ENCODE measurements at regions of chr14 and their contacts with region 1.

Region 1: GRCh38 chr14:50003213-50004031 is 110.5 kb downstream of the ARF6 start:
- DNase-seq: peak; percentile 31
- H3K4me3 ChIP-seq: peak overlapping the region; percentile 38 to 67 (median 57)
- H3K27ac ChIP-seq: no peak overlapping the region
- H3K4me1 ChIP-seq: peaks cover 39% of the 10 kb centered on the region
- H3K27me3 ChIP-seq: no peaks in the 10 kb centered on the region
- CTCF ChIP-seq: no peak
- POLR2A ChIP-seq: peak; percentile 64

Region 2: DNA sequence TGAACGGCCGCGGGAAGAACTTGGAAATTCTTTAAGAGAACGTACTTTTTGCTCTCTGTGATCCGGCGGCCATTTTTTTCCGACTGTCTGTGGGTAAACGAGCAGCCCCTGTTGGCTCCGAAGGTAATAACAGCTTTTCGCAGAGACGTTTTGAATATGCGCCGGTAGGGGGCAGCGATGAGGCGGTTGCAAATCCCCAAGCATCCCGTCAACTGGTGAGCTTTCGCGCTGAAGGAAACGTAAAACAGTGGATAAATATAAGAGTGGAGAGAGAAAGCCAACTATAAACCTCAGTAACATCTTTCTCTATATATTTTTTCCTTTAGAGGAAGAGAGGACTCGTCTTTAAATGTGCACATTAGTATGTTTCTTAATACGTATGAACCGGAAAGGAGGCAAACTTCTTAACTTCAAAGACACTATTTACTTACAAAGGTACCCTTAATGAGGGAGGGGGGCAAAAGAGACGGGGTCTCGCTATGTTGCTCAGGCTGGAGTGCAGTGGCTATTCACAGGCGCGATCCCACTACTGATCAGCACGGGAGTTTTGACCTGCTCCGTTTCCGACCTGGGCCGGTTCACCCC is 141.2 kb before region 1 on chr14:
- CTCF ChIA-PET with region 1: interaction called, 12 read pairs
- POLR2A ChIA-PET with region 1: no interaction called
- dilution Hi-C with region 1: no loop called
- intact Hi-C with region 1: no loop called
- DNase-seq: peak; percentile 93
- H3K4me3 ChIP-seq: peak overlapping the region; percentile 59 to 91 (median 73)
- H3K27ac ChIP-seq: peak overlapping the region; percentile 77
- H3K4me1 ChIP-seq: peaks cover 15% of the 10 kb centered on the region
- H3K27me3 ChIP-seq: no peaks in the 10 kb centered on the region
- CTCF ChIP-seq: peak; percentile 100
- POLR2A ChIP-seq: no peak

Region 3: DNA sequence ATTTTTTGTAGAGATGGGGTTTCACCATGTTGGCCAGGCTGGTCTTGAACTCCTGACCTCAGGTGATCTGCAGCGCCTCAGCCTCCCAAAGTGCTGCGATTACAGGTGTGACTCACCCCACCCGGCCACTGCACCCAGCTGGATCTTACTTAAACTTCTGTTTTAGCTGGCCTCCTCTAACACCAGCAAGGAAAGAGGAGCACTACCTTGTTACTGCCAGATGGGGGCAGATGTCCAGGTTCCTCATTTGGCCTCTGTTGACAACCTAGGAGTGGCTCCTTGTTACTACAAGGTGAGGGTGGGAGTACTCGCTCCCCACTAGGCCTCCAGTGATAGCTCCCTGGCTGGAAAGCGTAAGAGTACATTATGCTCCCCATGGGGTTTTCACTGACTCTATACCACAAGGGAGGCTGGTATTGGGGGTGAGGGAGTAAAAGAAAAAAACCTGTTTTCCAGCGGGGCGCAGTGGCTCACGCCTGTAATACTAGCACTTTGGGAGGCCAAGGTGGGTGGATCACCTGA is 123.7 kb before region 1 on chr14:
- CTCF ChIA-PET with region 1: interaction called, 11 read pairs
- POLR2A ChIA-PET with region 1: no interaction called
- dilution Hi-C with region 1: no loop called
- intact Hi-C with region 1: no loop called
- DNase-seq: peak; percentile 66
- H3K4me3 ChIP-seq: no peak overlapping the region
- H3K27ac ChIP-seq: no peak overlapping the region
- H3K4me1 ChIP-seq: no peaks in the 10 kb centered on the region
- H3K27me3 ChIP-seq: no peaks in the 10 kb centered on the region
- CTCF ChIP-seq: peak; percentile 72 to 73
- POLR2A ChIP-seq: no peak

Region 4: DNA sequence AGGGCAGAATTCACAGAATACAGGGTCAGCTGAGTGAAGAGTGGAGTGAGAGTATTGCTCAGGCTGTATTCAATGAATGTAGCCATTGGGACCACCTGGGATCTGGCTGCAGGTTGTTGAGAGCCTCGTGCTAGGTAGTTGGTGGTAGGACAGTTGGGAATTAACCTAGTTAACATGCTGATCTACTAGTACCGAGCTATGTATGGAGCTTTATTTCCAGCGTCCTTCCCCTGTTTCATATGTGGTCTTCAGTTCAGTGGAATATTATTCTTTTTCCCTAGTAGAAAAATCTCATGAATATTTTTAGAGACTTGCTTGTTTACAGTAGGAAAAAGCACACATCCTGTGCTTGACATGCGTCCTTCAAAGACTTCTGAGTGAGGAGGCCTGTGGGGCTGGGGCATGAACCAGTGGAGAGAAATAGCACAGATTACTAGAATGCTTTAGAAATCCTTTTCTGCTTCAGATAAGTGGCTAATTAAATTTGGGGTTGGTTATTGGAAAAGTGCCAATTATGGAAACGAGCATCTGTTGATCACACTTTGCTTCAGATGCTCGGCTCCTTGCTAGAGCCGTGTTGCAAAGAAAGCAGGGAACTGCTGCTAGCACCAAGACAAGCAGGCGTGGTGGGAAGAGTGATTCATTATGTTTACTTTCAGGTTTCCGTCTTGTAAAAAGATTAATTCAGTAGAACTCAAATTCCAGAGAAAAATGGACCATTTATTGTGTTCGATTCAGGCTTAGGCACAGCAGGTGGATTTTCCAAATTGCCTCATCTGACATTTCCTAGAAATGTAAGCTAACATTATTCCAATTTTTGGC is 56.9 kb before region 1 on chr14:
- CTCF ChIA-PET with region 1: interaction called, 3 read pairs
- POLR2A ChIA-PET with region 1: no interaction called
- dilution Hi-C with region 1: no loop called
- intact Hi-C with region 1: loop called (anchors 1 kb)
- DNase-seq: peak; percentile 86
- H3K4me3 ChIP-seq: peak overlapping the region in 1 of 3 experiments; percentile 43
- H3K27ac ChIP-seq: peak overlapping the region; percentile 44
- H3K4me1 ChIP-seq: peaks cover 26% of the 10 kb centered on the region
- H3K27me3 ChIP-seq: no peaks in the 10 kb centered on the region
- CTCF ChIP-seq: no peak
- POLR2A ChIP-seq: no peak

Region 5: DNA sequence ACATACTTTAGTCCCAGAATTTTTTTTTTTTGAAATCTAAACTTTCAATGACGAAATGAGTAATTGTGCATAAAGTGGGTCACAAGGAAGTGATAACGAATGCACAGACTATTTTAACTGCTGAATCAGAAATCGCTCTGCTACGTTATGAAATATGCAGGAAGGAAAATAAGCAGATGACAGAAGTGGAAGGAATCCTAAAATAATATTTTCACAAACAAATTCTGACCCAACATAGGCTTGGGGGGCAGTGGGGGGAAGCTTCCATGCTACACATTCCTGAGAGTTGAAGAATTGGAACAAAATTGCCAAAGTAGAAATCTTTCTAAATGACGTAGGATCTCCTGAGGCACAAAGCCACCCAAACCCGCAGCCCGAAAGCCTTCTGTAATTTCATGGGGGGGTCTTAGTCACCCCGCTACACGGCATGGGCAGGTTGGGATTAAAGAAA is 20.9 kb before region 1 on chr14:
- CTCF ChIA-PET with region 1: interaction called, 11 read pairs
- POLR2A ChIA-PET with region 1: no interaction called
- dilution Hi-C with region 1: no loop called
- intact Hi-C with region 1: loop called (anchors 2 kb)
- DNase-seq: peak; percentile 87
- H3K4me3 ChIP-seq: peak overlapping the region in 2 of 3 experiments; percentile 1 to 61
- H3K27ac ChIP-seq: peak overlapping the region; percentile 89
- H3K4me1 ChIP-seq: peaks cover 15% of the 10 kb centered on the region
- H3K27me3 ChIP-seq: no peaks in the 10 kb centered on the region
- CTCF ChIP-seq: no peak
- POLR2A ChIP-seq: no peak

Region 6: GRCh38 chr14:50060871-50061663 is 57.6 kb after region 1 on chr14:
- CTCF ChIA-PET with region 1: interaction called, 11 read pairs
- POLR2A ChIA-PET with region 1: no interaction called
- dilution Hi-C with region 1: no loop called
- intact Hi-C with region 1: loop called (anchors 2 kb)
- DNase-seq: peak; percentile 82
- H3K4me3 ChIP-seq: no peak overlapping the region
- H3K27ac ChIP-seq: peak overlapping the region; percentile 88
- H3K4me1 ChIP-seq: peaks cover 31% of the 10 kb centered on the region
- H3K27me3 ChIP-seq: no peaks in the 10 kb centered on the region
- CTCF ChIP-seq: peak in 1 of 2 donors; percentile 4
- POLR2A ChIP-seq: no peak

Measured in endothelial cell of umbilical vein (primary cell).